ENCODE measurements at regions of chr4 and their contacts with region 1.

Region 1: GRCh38 chr4:150237110-150237857 is 159.0 kb downstream of the DCLK2 start:
- DNase-seq: no peak
- H3K4me3 ChIP-seq: no peak overlapping the region
- H3K27ac ChIP-seq: peak overlapping the region in 3 of 4 donors; percentile 21 to 66 (median 65)
- H3K4me1 ChIP-seq: peaks cover 0 to 14% (median 2%) of the 10 kb centered on the region in 4 donors
- H3K27me3 ChIP-seq: no peaks in the 10 kb centered on the region
- CTCF ChIP-seq: no peak
- EP300 ChIP-seq: no peak
- POLR2A ChIP-seq: no peak

Region 2: GRCh38 chr4:150145090-150145949 is 92.0 kb before region 1 on chr4:
- in situ Hi-C with region 1: no loop called
- intact Hi-C with region 1: loop called (anchors 5 kb)
- DNase-seq: no peak
- H3K4me3 ChIP-seq: no peak overlapping the region
- H3K27ac ChIP-seq: no peak overlapping the region
- H3K4me1 ChIP-seq: peaks cover 0 to 11% (median 0%) of the 10 kb centered on the region in 4 donors
- H3K27me3 ChIP-seq: no peaks in the 10 kb centered on the region
- CTCF ChIP-seq: no peak
- EP300 ChIP-seq: no peak
- POLR2A ChIP-seq: no peak